IMR-90 (cell line): ENCODE measurements at regions of chr6 and their contacts with region 1.

Region 1: GRCh38 chr6:117568831-117569410 is 33.4 kb downstream of the GOPC start:
- DNase-seq: no peak
- ATAC-seq: no peak
- H3K4me3 ChIP-seq: no peak overlapping the region
- H3K27ac ChIP-seq: no peak overlapping the region
- H3K4me1 ChIP-seq: no peaks in the 10 kb centered on the region
- H3K27me3 ChIP-seq: no peaks in the 10 kb centered on the region
- CTCF ChIP-seq: no peak
- POLR2A ChIP-seq: no peak
- RAD21 ChIP-seq: no peak

Region 2: DNA sequence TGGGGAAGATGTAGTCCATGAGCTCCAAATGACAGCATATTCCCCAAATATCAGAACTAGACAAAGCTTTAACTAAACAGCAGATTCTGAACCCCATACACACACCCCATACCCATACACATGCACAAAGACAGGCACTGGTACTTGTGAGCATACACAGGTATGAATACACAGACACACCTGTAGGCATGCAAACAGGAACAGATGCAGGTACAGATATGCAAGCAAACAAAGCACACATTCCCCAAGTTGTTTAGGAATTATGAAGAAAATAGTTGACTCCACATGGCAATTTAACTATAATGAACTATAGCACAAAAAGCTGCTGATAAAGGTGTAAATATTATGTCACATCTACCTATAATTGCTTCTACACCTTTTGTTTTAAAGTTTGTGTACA is 16.7 kb after region 1 on chr6:
- CTCF ChIA-PET with region 1: interaction called, 6 read pairs
- POLR2A ChIA-PET with region 1: no interaction called
- dilution Hi-C with region 1: no loop called
- in situ Hi-C with region 1: no loop called
- intact Hi-C with region 1: loop called (anchors 2 kb)
- DNase-seq: no peak
- ATAC-seq: no peak
- H3K4me3 ChIP-seq: no peak overlapping the region
- H3K27ac ChIP-seq: no peak overlapping the region
- H3K4me1 ChIP-seq: no peaks in the 10 kb centered on the region
- H3K27me3 ChIP-seq: no peaks in the 10 kb centered on the region
- CTCF ChIP-seq: no peak
- POLR2A ChIP-seq: no peak
- RAD21 ChIP-seq: no peak

Region 3: DNA sequence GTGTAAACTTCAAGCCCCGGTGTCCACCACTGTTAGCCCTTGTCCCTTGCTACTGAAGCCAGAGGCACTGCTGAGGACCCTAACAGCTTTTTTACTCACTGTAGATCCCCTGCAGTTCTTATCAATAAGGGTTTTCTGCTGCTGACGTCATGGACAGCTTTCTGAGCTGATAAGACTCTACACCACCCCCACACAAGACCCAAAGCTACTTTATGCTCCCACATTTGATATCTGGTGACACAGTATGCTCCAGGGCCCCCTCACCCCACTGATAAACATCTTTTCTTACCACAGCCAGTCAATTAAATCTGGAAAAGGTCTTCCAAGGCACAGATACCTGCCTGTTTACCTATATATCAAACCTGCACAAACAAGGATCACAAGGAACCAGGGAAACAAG is 171.7 kb after region 1 on chr6:
- CTCF ChIA-PET with region 1: no interaction called
- POLR2A ChIA-PET with region 1: no interaction called
- dilution Hi-C with region 1: no loop called
- in situ Hi-C with region 1: no loop called
- intact Hi-C with region 1: no loop called
- DNase-seq: no peak
- ATAC-seq: no peak
- H3K4me3 ChIP-seq: no peak overlapping the region
- H3K27ac ChIP-seq: no peak overlapping the region
- H3K4me1 ChIP-seq: no peaks in the 10 kb centered on the region
- H3K27me3 ChIP-seq: no peaks in the 10 kb centered on the region
- CTCF ChIP-seq: no peak
- POLR2A ChIP-seq: no peak
- RAD21 ChIP-seq: no peak